ENCODE measurements at regions of chr19 and their contacts with region 1.

Region 1: DNA sequence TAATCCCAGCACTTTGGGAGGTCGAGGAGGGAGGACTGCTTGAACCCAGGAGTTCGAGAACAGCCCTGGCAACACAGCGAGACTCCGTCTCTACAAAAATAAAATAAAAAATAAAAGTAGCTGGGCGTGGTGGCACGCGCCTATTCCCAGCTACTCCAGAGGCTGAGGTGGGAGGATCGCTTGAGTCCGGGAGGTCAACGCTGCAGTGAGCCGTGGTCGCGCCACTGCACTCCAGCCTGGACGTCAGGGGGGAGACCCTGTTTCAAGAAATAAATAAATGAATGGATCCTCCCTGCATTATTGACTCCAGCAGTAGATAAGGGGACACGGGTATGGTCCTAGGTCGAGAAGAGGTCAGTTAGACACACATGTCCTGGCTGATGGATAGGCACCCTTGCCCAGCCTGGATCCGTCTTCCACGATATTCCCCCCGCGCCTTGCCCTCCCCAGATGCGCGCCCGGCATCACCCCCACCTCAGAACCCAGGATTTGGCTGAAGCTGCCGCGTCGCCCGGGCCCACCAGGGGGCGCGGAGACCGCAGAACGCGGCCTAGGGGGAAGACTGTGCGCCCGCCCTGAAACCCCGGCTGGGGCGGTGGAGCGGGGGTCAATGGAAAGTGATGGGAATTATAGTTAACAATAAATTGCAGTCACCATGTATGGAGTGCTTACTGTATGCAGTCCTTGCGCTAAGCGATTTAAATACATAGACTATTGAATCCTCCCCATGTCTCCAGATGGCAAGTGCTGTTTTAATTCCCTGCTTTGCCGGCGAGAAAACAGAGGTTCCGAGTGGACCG is 2.1 kb upstream of the HOOK2 start:
- DNase-seq: peak; percentile 73
- H3K27ac ChIP-seq: peak overlapping the region; percentile 99
- CTCF ChIP-seq: peak; percentile 96

Region 2: DNA sequence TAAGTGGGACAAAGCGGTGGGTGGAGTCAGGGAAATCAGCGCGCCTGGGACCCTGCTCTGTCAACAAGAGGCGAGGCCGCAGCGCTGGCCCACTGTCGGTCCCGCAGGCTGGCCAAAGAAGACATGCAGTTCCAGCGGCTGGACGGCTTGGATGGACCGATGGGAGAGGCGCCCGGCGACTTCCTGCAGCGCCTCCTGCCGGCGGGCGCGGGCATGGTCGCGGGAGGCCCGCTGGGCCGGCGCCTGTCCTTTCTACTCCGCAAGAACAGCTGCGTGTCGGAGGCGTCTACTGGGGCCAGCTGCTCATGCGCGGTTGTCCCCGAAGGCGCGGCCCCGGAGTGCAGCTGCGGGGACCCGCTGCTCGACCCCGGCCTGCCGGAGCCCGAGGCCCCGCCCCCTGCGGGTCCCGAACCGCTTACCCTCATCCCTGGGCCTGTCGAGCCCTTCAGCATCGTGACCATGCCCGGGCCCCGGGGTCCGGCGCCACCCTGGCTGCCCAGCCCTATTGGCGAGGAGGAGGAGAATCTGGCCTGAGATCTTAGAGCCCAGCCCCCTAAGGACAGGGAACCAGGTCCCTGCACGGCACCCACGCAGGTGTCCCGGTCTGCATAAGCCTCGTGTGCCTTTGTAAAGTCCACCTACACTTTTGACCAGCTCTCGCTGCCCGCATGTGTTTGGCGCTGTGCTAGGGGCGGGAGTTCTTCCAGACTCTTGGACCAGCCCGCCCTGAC is 19.7 kb before region 1 on chr19:
- CTCF ChIA-PET with region 1: interaction called, 10 read pairs
- POLR2A ChIA-PET with region 1: interaction called, 4 read pairs
- DNase-seq: peak; percentile 27
- H3K27ac ChIP-seq: no peak overlapping the region
- CTCF ChIP-seq: peak; percentile 76

Region 3: GRCh38 chr19:12789904-12790619 is 12.6 kb after region 1 on chr19:
- CTCF ChIA-PET with region 1: interaction called, 40 read pairs
- POLR2A ChIA-PET with region 1: interaction called, 120 read pairs
- DNase-seq: peak; percentile 93
- H3K27ac ChIP-seq: peak overlapping the region; percentile 100
- CTCF ChIP-seq: no peak

Measured in RWPE1 (cell line).